Heart right ventricle (tissue), 16 donors: ENCODE measurements at regions of chr13 and their contacts with region 1.

Region 1: DNA sequence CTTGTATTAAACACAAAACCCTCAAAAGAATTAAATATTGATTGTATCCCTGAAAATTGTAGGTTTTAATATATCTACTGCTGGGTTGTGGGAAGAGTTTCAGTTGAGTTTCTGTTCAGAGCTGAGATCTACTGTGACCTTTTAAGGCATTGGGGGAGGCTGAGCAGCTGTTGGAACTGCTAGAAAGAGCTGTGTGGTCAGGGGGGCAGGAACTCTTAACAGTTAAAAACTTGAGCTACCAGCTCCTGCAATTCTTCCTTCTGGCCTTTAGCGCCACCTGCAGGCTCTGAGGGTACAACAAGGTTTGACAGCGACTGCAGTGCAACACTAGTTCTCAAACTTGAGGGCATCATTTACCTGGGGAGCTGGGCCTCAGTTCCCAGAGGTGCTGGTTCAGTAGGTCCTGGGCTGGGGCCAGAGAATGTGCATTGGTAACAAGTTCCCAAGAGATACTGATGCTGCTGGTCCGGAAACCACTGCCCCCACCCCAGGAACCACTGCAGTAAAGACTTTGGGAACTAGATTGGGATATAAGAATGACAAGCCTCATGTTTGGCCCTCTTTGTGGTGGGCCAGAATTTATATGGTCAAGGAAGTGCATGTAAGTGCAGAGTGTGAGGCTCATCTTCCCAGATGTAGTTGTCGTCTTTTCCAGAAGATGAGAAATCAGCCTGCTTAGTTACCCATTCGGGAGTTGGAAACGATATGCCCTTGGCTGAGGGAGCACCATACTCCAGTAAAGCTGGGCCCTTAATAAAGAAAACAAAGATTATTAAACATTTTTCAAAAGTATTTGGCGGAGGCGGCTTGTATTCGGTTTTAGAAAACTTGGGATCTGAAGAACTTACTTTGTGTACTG is 2.6 kb downstream of the RNASEH2B start:
- DNase-seq: peak; percentile 87 to 89
- ATAC-seq: peak in 7 of 8 donors; percentile 14 to 69 (median 49)
- H3K4me3 ChIP-seq: peak overlapping the region in 1 of 10 donors; percentile 86
- H3K27ac ChIP-seq: peak overlapping the region in 6 of 10 donors; percentile 20 to 96 (median 69)
- H3K4me1 ChIP-seq: peaks cover 8 to 75% (median 56%) of the 10 kb centered on the region in 9 donors
- H3K27me3 ChIP-seq: no peaks in the 10 kb centered on the region
- CTCF ChIP-seq: peak; percentile 65 to 91 (median 87)

Region 2: GRCh38 chr13:49976314-49977258 is 935.6 kb before region 1 on chr13:
- intact Hi-C with region 1: loop called in 9 of 10 experiments (anchors 2 to 10 kb)
- DNase-seq: peak; percentile 57 to 71
- ATAC-seq: peak; percentile 64 to 85 (median 80)
- H3K4me3 ChIP-seq: no peak overlapping the region
- H3K27ac ChIP-seq: no peak overlapping the region
- H3K4me1 ChIP-seq: peaks cover 0 to 5% (median 0%) of the 10 kb centered on the region in 9 donors
- H3K27me3 ChIP-seq: no peaks in the 10 kb centered on the region
- CTCF ChIP-seq: peak; percentile 71 to 94 (median 87)

Region 3: DNA sequence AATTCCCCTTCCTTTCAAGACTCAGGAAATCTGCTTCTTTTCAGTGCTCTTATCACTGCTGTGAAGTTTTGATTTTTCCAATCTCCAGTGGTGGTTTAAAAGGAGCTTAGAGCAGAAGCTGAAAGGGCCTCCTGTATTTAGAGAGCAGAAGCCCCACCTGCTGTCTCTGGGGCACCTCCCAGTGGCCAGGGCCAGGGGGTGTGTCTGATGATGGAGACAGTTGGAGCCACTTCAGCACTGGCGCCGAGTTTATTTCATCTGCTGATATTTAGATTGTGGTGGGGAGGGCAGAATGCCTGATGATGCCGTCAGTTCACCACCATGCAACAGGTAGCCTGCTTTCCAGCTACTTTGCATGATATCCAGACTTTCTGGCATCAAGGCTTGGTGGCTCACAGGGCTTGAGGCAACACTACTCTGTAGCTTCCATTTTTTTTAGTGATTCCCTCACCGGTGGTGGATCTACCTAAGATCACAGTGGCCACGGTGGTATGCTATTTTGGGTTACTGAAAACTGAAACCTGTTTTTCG is 525.0 kb before region 1 on chr13:
- intact Hi-C with region 1: loop called in 1 of 10 experiments (anchors 10 kb)
- DNase-seq: peak; percentile 52 to 65
- ATAC-seq: peak; percentile 86 to 96 (median 94)
- H3K4me3 ChIP-seq: peak overlapping the region in 9 of 10 donors; percentile 4 to 43 (median 35)
- H3K27ac ChIP-seq: peak overlapping the region; percentile 5 to 83 (median 78)
- H3K4me1 ChIP-seq: peaks cover 0 to 34% (median 19%) of the 10 kb centered on the region in 9 donors
- H3K27me3 ChIP-seq: no peaks in the 10 kb centered on the region
- CTCF ChIP-seq: peak in 6 of 9 donors; percentile 27 to 54 (median 38)

Region 4: DNA sequence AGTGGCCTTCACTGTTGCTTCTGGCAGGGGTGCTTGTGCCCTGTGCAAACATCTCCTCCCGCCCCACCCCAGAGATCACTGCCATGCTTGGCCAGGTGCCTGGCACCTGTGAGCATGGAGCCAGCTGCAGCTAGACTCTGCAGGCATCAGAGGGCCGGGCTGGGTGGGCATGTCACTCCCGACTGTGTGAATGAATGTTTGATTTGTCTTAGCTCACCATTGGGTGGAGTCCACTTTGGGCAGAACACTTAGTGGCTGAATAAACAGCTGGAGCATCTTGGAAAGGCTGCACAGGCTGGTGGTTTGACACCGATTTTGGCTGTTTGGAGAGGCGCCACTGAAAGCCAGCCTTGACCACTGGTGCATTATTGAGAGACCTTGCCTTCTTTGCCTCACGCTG is 336.0 kb before region 1 on chr13:
- intact Hi-C with region 1: loop called in 1 of 10 experiments (anchors 5 kb)
- DNase-seq: no peak
- ATAC-seq: no peak
- H3K4me3 ChIP-seq: no peak overlapping the region
- H3K27ac ChIP-seq: no peak overlapping the region
- H3K4me1 ChIP-seq: peaks cover 4 to 42% (median 17%) of the 10 kb centered on the region in 9 donors
- H3K27me3 ChIP-seq: no peaks in the 10 kb centered on the region
- CTCF ChIP-seq: no peak

Region 5: GRCh38 chr13:50850445-50850844 is 61.7 kb before region 1 on chr13:
- intact Hi-C with region 1: no loop called
- DNase-seq: no peak
- ATAC-seq: no peak
- H3K4me3 ChIP-seq: no peak overlapping the region
- H3K27ac ChIP-seq: no peak overlapping the region
- H3K4me1 ChIP-seq: no peaks in the 10 kb centered on the region
- H3K27me3 ChIP-seq: no peaks in the 10 kb centered on the region
- CTCF ChIP-seq: no peak

Region 6: GRCh38 chr13:51047434-51048165 is 135.4 kb after region 1 on chr13:
- intact Hi-C with region 1: no loop called
- DNase-seq: no peak
- ATAC-seq: no peak
- H3K4me3 ChIP-seq: no peak overlapping the region
- H3K27ac ChIP-seq: no peak overlapping the region
- H3K4me1 ChIP-seq: no peaks in the 10 kb centered on the region
- H3K27me3 ChIP-seq: no peaks in the 10 kb centered on the region
- CTCF ChIP-seq: no peak